Motor neuron (in vitro differentiated cells): ENCODE measurements at regions of chr19 and their contacts with region 1.

Region 1: GRCh38 chr19:8252922-8253589 is 43.9 kb downstream of the CERS4 start:
- ATAC-seq: peak; percentile 74 to 98 (median 88)
- H3K4me3 ChIP-seq: no peak overlapping the region
- H3K27ac ChIP-seq: no peak overlapping the region
- H3K4me1 ChIP-seq: no peaks in the 10 kb centered on the region

Region 2: DNA sequence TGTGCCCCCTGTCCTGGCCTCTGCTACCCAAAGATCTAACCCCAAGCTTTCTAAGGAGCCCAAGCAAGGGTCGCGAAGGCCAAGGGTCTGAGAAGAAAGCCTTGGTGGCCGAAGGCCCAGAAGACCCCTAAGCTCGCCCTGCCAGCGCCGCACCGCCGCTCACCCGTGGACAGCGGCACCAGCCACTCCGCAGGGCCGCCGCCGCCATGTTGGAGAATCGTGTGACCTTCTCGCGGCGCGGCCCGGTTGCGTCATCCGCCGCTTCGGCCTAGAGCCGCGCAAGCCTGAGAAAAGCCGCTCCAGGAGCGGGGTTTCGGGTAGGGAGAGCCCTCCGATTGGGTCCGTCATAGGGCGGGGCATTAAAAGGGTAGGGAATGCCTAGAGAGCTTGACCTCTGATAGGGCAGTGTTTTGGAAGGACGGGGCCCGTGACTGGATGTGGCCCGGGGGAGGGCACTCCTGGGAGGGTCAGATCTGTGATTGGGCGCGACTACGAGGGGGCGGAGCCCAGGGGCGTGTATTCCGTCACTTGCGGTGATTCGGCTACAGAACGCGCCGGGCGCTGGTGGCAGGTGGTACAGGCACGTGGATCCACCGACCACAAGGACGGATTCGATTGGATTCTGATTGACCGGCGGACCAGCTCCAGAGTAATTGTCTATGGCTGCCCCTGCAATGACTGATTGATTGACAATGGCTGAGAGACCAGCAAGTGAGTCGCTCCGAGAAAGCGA is 309.4 kb before region 1 on chr19 and contains the start of gene TIMM44:
- in situ Hi-C with region 1: loop called in 3 of 9 experiments (anchors 10 to 25 kb)
- ATAC-seq: peak; percentile 92 to 97 (median 94)
- H3K4me3 ChIP-seq: peak within 1 kb of the TSS; percentile 70 to 85 (median 73)
- H3K27ac ChIP-seq: peak within 1 kb of the TSS; percentile 97
- H3K4me1 ChIP-seq: peaks cover 7 to 9% of the 10 kb centered on the region in 2 donors
- total RNA-seq, gene TIMM44: 38.7 to 106 (median 65.1) TPM